ENCODE measurements at regions of chr6 and their contacts with region 1.

Region 1: DNA sequence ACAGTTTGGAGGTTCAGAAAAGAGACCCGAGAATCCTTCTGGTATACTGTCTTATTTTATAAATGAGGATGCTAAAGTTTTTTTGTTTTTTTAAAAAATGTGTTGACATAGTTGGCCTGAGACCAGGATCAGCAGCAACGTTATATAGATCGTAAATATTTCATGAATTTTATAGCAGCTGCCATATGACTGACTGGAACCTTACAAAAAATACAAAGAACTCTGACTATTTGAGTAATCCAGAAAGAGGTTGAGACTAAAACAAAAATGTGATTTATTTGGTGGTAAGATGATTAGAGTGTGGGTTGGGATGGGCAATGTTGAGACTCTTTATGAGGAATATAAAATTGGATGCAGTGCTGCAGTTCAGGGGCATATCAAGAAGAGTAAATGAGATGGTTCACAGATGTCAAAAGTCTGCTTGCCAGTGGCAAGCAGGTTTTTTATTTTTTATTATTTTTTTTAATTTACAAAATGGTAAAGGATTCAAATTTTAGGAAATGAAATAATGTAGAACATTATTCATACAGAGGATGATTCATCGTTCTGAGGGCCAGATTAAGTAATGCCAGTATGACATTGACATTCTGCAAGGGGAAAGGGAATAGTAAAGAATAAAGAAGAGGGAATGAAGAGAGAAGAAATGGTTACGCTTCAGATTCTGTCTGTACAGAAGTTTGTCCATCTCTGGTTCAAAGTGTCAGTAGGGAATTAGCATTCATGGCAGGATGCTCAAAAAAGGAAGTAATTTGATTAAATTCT is 58.5 kb downstream of the SCAF8 start:
- DNase-seq: no peak
- ATAC-seq: no peak
- H3K4me3 ChIP-seq: no peak overlapping the region
- H3K4me3 Mint-ChIP-seq: no peak overlapping the region
- H3K27ac ChIP-seq: no peak overlapping the region
- H3K27ac Mint-ChIP-seq: no peak overlapping the region
- H3K4me1 ChIP-seq: peaks cover 0 to 2% of the 10 kb centered on the region in 2 experiments
- H3K4me1 Mint-ChIP-seq: peaks cover 10 to 17% (median 17%) of the 10 kb centered on the region in 3 donors
- H3K27me3 ChIP-seq: no peaks in the 10 kb centered on the region
- H3K27me3 Mint-ChIP-seq: no peaks in the 10 kb centered on the region

Region 2: DNA sequence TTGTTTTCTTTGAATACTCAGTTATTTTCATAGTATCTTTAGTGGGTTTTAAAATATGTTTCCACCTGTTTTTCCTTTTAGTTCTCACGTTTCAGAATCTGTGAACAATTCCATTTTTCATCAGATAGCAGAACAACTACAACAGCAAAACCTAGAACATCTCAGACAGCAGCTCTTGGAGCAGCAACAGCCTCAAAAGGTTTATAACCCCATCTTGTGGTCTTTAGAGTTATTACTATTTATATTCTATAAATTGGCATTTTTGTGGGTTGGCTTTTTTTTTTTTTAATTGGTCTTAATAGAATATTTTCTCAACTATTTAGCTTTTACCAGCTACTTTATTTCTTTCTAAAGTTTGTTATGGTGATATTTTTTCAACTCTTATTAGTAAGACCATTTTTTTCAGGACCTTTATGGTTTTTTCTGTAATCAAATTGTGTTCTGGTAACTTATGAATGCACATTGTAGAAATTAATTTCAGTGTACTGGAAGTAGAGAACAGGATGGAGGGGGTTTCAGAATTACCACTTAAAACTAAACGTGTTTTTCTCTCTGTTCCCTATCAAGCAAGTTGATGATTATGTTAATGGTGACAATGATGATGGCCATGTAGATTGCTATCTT is 13.7 kb after region 1 on chr6:
- CTCF ChIA-PET with region 1: interaction called in 1 of 2 experiments, 3 read pairs
- POLR2A ChIA-PET with region 1: interaction called, 3 to 14 read pairs
- DNase-seq: peak in 3 of 35 experiments; percentile 3 to 63 (median 3)
- ATAC-seq: peak in 3 of 4 experiments; percentile 45 to 66 (median 62)
- H3K4me3 ChIP-seq: no peak overlapping the region
- H3K4me3 Mint-ChIP-seq: no peak overlapping the region
- H3K27ac ChIP-seq: no peak overlapping the region
- H3K27ac Mint-ChIP-seq: no peak overlapping the region
- H3K4me1 ChIP-seq: no peaks in the 10 kb centered on the region
- H3K4me1 Mint-ChIP-seq: peaks cover 0 to 2% (median 1%) of the 10 kb centered on the region in 3 donors
- H3K27me3 ChIP-seq: no peaks in the 10 kb centered on the region
- H3K27me3 Mint-ChIP-seq: no peaks in the 10 kb centered on the region

Region 3: DNA sequence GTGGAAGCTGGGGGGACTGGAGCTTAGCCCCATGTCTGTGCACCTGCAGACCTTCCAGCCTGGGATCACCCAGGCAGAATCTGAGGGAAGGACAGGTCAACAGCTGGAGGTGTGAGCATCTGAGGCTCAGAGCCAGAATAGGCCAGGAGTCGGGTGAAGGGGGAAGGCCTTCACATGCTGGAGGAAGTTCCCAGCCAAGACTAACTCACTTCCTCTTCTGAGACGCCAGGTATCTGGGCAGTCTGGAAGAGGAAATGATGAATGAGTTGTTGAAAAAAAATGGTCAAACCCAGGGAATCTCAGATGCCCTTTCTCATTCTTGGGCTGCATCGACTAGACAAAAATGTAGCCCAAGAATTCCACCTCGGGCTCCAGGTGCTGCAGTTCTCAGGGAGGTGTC is 129.7 kb after region 1 on chr6:
- CTCF ChIA-PET with region 1: no interaction called
- POLR2A ChIA-PET with region 1: no interaction called
- DNase-seq: no peak
- ATAC-seq: no peak
- H3K4me3 ChIP-seq: no peak overlapping the region
- H3K4me3 Mint-ChIP-seq: no peak overlapping the region
- H3K27ac ChIP-seq: no peak overlapping the region
- H3K27ac Mint-ChIP-seq: no peak overlapping the region
- H3K4me1 ChIP-seq: peaks cover 0 to 2% of the 10 kb centered on the region in 2 experiments
- H3K4me1 Mint-ChIP-seq: peaks cover 12 to 30% (median 14%) of the 10 kb centered on the region in 3 donors
- H3K27me3 ChIP-seq: no peaks in the 10 kb centered on the region
- H3K27me3 Mint-ChIP-seq: no peaks in the 10 kb centered on the region

Region 4: GRCh38 chr6:155861821-155862220 is 1070.1 kb after region 1 on chr6:
- CTCF ChIA-PET with region 1: no interaction called
- POLR2A ChIA-PET with region 1: no interaction called
- DNase-seq: no peak
- ATAC-seq: no peak
- H3K4me3 ChIP-seq: no peak overlapping the region
- H3K4me3 Mint-ChIP-seq: no peak overlapping the region
- H3K27ac ChIP-seq: no peak overlapping the region
- H3K27ac Mint-ChIP-seq: no peak overlapping the region
- H3K4me1 ChIP-seq: no peaks in the 10 kb centered on the region
- H3K4me1 Mint-ChIP-seq: no peaks in the 10 kb centered on the region
- H3K27me3 ChIP-seq: no peaks in the 10 kb centered on the region
- H3K27me3 Mint-ChIP-seq: peaks cover 0 to 4% of the 10 kb centered on the region in 2 donors

Region 5: DNA sequence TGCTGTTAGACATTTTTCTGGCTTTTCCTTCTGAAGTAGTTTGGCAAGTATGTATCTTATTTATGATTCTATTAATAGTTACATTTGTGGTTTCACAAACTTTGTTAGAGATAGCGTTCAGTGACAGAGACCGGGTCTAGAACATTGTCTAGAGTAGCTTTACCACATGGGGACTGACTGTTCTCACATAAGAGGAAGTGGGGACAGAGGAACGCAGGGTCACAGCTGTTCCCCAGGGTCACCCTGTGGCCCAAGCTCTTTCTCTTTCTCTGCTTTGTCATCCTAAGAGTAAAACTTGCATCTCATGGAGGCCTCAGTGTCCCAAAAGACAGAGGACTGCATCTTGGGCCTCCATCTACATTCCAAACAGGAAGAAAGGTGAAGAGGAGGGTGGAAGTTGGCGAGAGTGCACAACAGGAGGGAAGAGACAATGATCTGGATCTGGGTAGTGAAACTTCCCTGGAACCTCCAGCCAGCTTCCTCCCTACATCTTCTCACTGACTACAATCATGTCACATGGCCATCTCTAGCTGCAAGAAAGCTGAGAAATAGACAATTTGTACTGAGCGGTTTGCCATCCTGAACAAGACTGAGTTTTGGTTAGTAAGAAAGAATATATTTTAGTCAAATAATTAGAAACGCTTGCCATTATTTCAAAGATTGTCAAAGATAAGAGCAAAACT is 1339.6 kb after region 1 on chr6:
- CTCF ChIA-PET with region 1: no interaction called
- POLR2A ChIA-PET with region 1: no interaction called
- DNase-seq: no peak
- ATAC-seq: no peak
- H3K4me3 ChIP-seq: no peak overlapping the region
- H3K4me3 Mint-ChIP-seq: no peak overlapping the region
- H3K27ac ChIP-seq: no peak overlapping the region
- H3K27ac Mint-ChIP-seq: no peak overlapping the region
- H3K4me1 ChIP-seq: no peaks in the 10 kb centered on the region
- H3K4me1 Mint-ChIP-seq: peaks cover 0 to 6% (median 6%) of the 10 kb centered on the region in 3 donors
- H3K27me3 ChIP-seq: no peaks in the 10 kb centered on the region
- H3K27me3 Mint-ChIP-seq: no peaks in the 10 kb centered on the region

Measured in T-cell (primary cell).